ENCODE measurements at regions of chr17 and their contacts with region 1.

Region 1: DNA sequence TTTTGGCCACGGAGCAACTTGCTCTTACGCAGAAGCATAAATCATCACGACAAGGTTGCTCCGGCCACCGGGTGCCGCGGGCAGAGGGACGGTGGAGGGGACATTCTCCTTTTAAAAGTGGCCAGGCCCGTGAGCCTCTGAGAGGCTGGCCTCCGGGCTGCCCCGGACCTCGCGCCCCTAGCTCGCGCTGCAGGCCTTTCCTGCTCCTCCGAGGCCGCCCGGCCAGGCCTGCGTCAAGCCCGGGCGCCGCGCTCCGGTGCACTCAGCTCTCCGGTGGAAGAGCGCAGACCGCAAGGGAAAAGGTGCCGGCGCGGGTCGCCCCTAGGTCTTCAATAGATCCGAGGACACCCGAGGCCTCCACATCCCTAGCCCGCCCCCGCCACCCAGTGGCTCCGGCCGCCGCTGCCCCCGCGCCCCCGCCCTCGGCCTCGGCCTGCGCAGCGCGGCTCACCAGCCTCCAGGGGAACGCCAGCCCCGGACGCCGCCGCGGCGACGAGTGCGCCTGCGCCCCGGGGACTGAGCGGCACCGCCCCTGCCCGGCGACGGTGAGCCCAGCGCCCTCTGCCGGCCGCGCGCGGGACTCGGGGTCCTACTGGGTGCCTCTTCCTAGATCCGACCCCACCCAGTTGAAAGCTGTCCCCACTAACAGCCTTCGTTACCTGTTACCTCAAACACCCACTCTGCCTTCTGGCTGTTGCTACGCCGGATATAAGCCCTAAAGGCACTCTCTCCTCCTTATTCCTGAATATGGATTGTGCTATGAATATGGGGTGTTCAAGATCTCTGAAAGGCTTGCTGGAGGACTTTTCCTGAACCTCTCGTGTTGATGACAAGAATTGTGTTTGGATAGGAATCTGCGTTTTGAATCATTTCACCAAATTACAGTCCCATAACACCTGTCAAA is at the start of gene LYRM9:
- DNase-seq: peak; percentile 82 to 94 (median 89)
- H3K4me3 ChIP-seq: peak within 1 kb of the TSS; percentile 59 to 100 (median 87)
- H3K27ac ChIP-seq: peak within 1 kb of the TSS; percentile 74 to 99 (median 96)
- H3K27me3 ChIP-seq: no peaks in the 10 kb centered on the region
- CTCF ChIP-seq: peak; percentile 60 to 99 (median 92)
- total RNA-seq, gene LYRM9: 9.1 to 68.0 (median 37.2) TPM

Region 2: DNA sequence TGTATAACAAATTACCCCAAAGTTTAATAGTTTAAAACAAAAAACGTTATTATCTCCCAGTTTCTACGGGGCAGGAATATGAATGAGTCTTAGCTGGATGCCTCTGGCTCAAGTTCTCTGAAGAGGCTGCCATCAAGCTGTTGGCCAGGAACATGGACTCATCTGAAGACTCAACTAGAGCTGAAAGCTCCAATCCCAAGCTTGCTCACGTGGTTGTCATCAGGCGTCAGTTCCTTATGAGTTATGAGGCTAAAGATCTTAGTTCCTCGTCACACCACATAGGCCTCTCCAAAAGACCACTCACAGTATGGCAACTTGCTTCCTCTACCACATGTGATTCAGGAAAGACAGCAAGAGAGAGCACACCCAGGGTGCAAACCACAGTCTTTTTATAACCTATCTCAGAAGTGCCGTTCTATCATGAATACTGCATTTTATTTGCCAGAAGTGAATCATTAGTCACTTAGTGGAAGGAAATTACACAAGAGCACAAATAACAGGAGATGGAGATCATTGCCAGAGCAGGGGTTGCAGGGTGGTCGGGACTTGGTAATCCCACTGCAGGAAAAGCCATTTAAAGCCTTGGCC is 100.7 kb after region 1 on chr17:
- intact Hi-C with region 1: loop called (anchors 2 to 5 kb)
- DNase-seq: peak in 1 of 10 donors; percentile 43
- H3K4me3 ChIP-seq: peak overlapping the region in 11 of 59 donors; percentile 2 to 32 (median 10)
- H3K27ac ChIP-seq: peak overlapping the region; percentile 4 to 98 (median 94)
- H3K27me3 ChIP-seq: no peaks in the 10 kb centered on the region
- CTCF ChIP-seq: peak in 4 of 56 donors; percentile 4 to 8 (median 5)

Region 3: DNA sequence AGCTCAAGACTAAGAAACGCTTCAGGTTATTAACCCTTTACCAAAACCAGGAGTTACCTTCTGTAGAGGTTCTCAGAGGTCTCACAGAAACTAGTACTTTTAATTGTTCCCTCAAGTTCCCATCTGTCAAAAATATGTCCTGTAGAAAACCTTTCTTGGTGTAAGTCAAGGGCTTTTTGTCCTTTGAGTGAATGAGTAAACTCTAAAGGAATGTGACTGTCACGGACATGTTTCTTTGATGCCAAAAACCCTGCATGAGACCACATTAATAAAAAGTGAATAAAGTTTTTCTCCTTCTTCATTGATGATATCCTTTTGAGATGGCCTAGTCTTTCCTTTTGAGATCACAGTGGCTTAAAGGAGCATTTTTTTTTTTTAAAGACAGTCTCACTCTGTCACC is 252.2 kb after region 1 on chr17:
- intact Hi-C with region 1: loop called in 1 of 2 experiments (anchors 5 kb)
- DNase-seq: no peak
- H3K4me3 ChIP-seq: no peak overlapping the region
- H3K27ac ChIP-seq: peak overlapping the region in 44 of 59 donors; percentile 1 to 95 (median 76)
- H3K27me3 ChIP-seq: no peaks in the 10 kb centered on the region
- CTCF ChIP-seq: no peak

Region 4: GRCh38 chr17:28193241-28193640 is 300.1 kb after region 1 on chr17:
- intact Hi-C with region 1: loop called (anchors 5 to 10 kb)
- DNase-seq: peak in 3 of 10 donors; percentile 32 to 44 (median 43)
- H3K4me3 ChIP-seq: no peak overlapping the region
- H3K27ac ChIP-seq: peak overlapping the region in 56 of 59 donors; percentile 1 to 85 (median 68)
- H3K27me3 ChIP-seq: no peaks in the 10 kb centered on the region
- CTCF ChIP-seq: peak in 38 of 56 donors; percentile 6 to 55 (median 30)